ENCODE measurements at regions of chrX and their contacts with region 1.

Region 1: GRCh38 chrX:114626323-114626722 is 42.4 kb downstream of the HTR2C start:
- DNase-seq: no peak
- ATAC-seq: no peak
- H3K4me3 ChIP-seq: no peak overlapping the region
- H3K27ac ChIP-seq: no peak overlapping the region
- H3K4me1 ChIP-seq: no peaks in the 10 kb centered on the region
- H3K27me3 ChIP-seq: peaks cover 0 to 30% (median 0%) of the 10 kb centered on the region in 7 donors
- CTCF ChIP-seq: peak in 7 of 9 donors; percentile 20 to 56 (median 37)

Region 2: GRCh38 chrX:113195949-113196348 is 1430.4 kb before region 1 on chrX:
- intact Hi-C with region 1: no loop called
- DNase-seq: no peak
- ATAC-seq: no peak
- H3K4me3 ChIP-seq: no peak overlapping the region
- H3K27ac ChIP-seq: no peak overlapping the region
- H3K4me1 ChIP-seq: no peaks in the 10 kb centered on the region
- H3K27me3 ChIP-seq: no peaks in the 10 kb centered on the region
- CTCF ChIP-seq: no peak

Region 3: DNA sequence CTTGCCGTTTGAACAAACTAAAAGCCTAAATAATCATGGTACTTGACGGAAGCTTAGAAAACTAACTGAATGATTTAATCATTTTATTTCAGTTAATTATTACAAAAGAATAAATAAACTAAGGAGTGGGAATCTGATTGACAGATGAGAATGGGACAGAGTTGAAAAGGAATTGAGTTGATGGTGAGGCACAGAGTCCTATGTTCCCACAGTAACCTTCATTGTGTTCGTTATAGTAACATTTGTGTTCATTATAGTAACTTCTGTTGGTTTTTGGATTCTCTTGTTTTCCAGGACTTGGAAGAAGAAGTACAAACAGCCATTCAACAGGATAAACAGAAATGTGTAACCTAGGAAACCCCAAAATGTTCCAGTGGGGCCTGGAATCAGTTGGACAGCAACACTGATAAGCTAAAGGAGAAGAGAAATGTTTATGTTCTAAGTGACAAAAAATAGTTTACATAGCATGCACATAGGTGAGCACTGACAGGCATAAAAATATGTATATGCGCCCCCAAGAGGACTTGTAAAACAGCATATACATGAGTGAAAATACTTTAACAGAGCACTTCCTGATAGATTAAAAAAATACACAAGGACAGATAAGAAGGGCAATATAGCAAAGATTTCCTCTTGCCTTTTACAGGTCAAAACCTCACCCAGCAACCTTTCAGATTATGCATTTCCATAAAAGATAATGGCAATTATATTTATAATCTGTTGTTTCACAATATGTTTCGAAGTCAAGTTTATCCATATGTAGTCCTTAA is 261.1 kb before region 1 on chrX:
- intact Hi-C with region 1: no loop called
- DNase-seq: no peak
- ATAC-seq: no peak
- H3K4me3 ChIP-seq: no peak overlapping the region
- H3K27ac ChIP-seq: no peak overlapping the region
- H3K4me1 ChIP-seq: no peaks in the 10 kb centered on the region
- H3K27me3 ChIP-seq: peaks cover 0 to 30% (median 0%) of the 10 kb centered on the region in 7 donors
- CTCF ChIP-seq: no peak

Region 4: GRCh38 chrX:114774691-114775090 is 148.4 kb after region 1 on chrX:
- intact Hi-C with region 1: no loop called
- DNase-seq: no peak
- ATAC-seq: no peak
- H3K4me3 ChIP-seq: no peak overlapping the region
- H3K27ac ChIP-seq: no peak overlapping the region
- H3K4me1 ChIP-seq: no peaks in the 10 kb centered on the region
- H3K27me3 ChIP-seq: peaks cover 0 to 5% (median 0%) of the 10 kb centered on the region in 7 donors
- CTCF ChIP-seq: peak in 4 of 9 donors; percentile 9 to 20 (median 16)

Region 5: GRCh38 chrX:114819509-114819908 is 193.2 kb after region 1 on chrX:
- intact Hi-C with region 1: no loop called
- DNase-seq: no peak
- ATAC-seq: no peak
- H3K4me3 ChIP-seq: no peak overlapping the region
- H3K27ac ChIP-seq: no peak overlapping the region
- H3K4me1 ChIP-seq: no peaks in the 10 kb centered on the region
- H3K27me3 ChIP-seq: peaks cover 0 to 7% (median 0%) of the 10 kb centered on the region in 7 donors
- CTCF ChIP-seq: no peak

Region 6: GRCh38 chrX:114970806-114971205 is 344.5 kb after region 1 on chrX:
- intact Hi-C with region 1: loop called in 3 of 10 experiments (anchors 5 to 10 kb)
- DNase-seq: no peak
- ATAC-seq: no peak
- H3K4me3 ChIP-seq: no peak overlapping the region
- H3K27ac ChIP-seq: no peak overlapping the region
- H3K4me1 ChIP-seq: no peaks in the 10 kb centered on the region
- H3K27me3 ChIP-seq: peaks cover 0 to 49% (median 0%) of the 10 kb centered on the region in 7 donors
- CTCF ChIP-seq: no peak